OCI-LY7 (cell line): ENCODE measurements at regions of chr6 and their contacts with region 1.

Region 1: DNA sequence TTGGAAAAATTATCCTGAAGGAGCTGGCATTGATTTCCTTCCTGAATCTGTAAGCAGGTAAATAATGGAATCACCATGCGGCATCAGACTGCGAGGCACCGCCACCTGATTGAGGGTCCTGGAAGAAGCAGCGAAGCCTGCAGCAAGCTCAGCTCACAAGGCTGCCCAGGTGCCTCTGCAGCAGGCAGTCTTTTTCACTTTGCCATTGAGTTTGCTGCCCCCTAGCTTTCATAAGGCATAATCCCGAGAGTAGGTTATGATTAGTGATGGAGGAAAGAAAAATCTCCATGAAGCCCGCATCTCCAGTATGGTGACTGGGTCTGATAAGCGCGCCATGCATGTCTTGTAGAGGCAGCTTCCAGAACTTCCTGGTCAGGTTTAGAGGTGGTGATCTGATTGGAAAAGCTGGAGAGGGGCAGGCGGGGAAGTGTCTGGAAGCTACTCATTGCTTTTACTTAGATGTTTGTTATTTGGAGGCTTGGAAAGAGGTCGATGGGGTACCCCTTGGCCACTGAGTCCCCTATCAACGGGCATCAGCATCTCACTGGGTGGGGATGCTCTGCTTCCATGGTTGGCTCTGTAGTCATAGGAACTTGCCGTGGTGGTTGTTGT is 26.7 kb downstream of the IYD start:
- DNase-seq: peak; percentile 82
- H3K4me3 ChIP-seq: no peak overlapping the region
- H3K27ac ChIP-seq: no peak overlapping the region
- H3K4me1 ChIP-seq: no peaks in the 10 kb centered on the region
- CTCF ChIP-seq: peak; percentile 91

Region 2: GRCh38 chr6:149934249-149935156 is 461.0 kb before region 1 on chr6:
- CTCF ChIA-PET with region 1: interaction called, 3 read pairs
- POLR2A ChIA-PET with region 1: no interaction called
- intact Hi-C with region 1: loop called (anchors 10 kb)
- DNase-seq: peak; percentile 78
- H3K4me3 ChIP-seq: no peak overlapping the region
- H3K27ac ChIP-seq: no peak overlapping the region
- H3K4me1 ChIP-seq: peaks cover 5% of the 10 kb centered on the region
- CTCF ChIP-seq: peak; percentile 94

Region 3: GRCh38 chr6:150334790-150335783 is 60.4 kb before region 1 on chr6:
- CTCF ChIA-PET with region 1: no interaction called
- POLR2A ChIA-PET with region 1: no interaction called
- intact Hi-C with region 1: loop called (anchors 2 kb)
- DNase-seq: peak; percentile 74
- H3K4me3 ChIP-seq: no peak overlapping the region
- H3K27ac ChIP-seq: no peak overlapping the region
- H3K4me1 ChIP-seq: peaks cover 8% of the 10 kb centered on the region
- CTCF ChIP-seq: peak; percentile 98

Region 4: DNA sequence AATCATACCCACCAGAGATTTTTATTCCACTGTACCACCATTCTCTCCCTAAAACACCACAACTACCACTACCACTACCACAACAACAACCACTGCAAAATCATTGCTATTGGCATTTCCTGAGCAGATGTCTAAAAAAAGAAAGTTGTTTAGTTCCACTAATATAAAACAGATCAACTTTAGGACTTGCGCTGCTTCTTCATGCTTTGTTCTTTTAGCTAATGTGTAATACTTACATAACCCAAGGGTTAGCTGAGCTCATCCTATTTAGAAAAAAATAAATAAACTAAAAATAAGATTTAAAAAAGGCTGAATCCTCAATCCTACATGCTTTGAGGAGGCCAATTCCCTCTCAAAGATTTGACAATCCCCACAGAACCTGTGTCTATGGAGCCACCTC is 15.2 kb before region 1 on chr6:
- CTCF ChIA-PET with region 1: interaction called, 4 read pairs
- POLR2A ChIA-PET with region 1: interaction called, 16 read pairs
- intact Hi-C with region 1: no loop called
- DNase-seq: no peak
- H3K4me3 ChIP-seq: no peak overlapping the region
- H3K27ac ChIP-seq: no peak overlapping the region
- H3K4me1 ChIP-seq: no peaks in the 10 kb centered on the region
- CTCF ChIP-seq: no peak

Region 5: GRCh38 chr6:150499882-150500312 is 104.4 kb after region 1 on chr6:
- CTCF ChIA-PET with region 1: no interaction called
- POLR2A ChIA-PET with region 1: no interaction called
- intact Hi-C with region 1: no loop called
- DNase-seq: no peak
- H3K4me3 ChIP-seq: no peak overlapping the region
- H3K27ac ChIP-seq: no peak overlapping the region
- H3K4me1 ChIP-seq: no peaks in the 10 kb centered on the region
- CTCF ChIP-seq: no peak

Region 6: DNA sequence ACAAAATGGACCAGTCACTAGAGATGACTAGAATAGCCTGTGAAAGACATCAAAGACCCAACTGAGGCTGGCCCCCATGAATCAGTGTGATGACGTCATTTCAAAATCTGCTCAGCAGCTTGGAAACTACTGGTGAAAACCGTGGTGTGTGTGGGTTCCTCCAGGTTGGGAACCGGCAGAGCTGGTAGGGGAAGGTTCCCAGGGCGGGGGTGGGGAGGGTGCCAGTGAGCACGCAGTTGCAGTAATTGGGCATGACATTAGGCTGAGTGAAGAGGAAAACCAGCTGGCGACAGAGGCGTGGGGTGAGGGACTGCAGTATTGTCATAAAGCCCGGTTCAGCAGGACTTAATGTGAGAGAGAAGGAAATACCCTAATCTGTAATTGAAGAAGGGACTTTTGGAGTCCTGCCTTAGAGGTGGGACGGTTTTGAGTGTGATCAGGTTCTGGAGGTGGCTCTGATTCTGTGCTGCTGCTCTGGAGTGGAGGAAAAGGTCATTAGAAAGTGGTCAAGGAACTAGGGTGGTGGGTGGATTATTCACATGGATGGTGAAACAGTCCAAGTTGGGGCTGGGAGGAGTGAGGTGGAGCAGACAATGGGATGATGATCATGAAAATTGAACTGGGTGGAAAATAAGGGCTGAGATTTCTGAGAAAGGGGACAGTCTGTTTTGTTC is 418.0 kb after region 1 on chr6:
- CTCF ChIA-PET with region 1: no interaction called
- POLR2A ChIA-PET with region 1: interaction called, 3 read pairs
- intact Hi-C with region 1: loop called (anchors 1 kb)
- DNase-seq: no peak
- H3K4me3 ChIP-seq: no peak overlapping the region
- H3K27ac ChIP-seq: no peak overlapping the region
- H3K4me1 ChIP-seq: peaks cover 8% of the 10 kb centered on the region
- CTCF ChIP-seq: no peak